ENCODE measurements at regions of chr7 and their contacts with region 1.

Region 1: GRCh38 chr7:100586266-100587025 is at the start of gene FBXO24:
- DNase-seq: peak; percentile 99
- ATAC-seq: peak; percentile 84
- H3K4me3 ChIP-seq: peak within 1 kb of the TSS; percentile 78
- H3K27ac ChIP-seq: peak within 1 kb of the TSS; percentile 77
- H3K4me1 ChIP-seq: peaks cover 17% of the 10 kb centered on the region
- H3K27me3 ChIP-seq: no peaks in the 10 kb centered on the region
- CTCF ChIP-seq: no peak
- total RNA-seq, gene FBXO24: 0.40 TPM in 1 of 2 replicates, not detected in the other

Region 2: DNA sequence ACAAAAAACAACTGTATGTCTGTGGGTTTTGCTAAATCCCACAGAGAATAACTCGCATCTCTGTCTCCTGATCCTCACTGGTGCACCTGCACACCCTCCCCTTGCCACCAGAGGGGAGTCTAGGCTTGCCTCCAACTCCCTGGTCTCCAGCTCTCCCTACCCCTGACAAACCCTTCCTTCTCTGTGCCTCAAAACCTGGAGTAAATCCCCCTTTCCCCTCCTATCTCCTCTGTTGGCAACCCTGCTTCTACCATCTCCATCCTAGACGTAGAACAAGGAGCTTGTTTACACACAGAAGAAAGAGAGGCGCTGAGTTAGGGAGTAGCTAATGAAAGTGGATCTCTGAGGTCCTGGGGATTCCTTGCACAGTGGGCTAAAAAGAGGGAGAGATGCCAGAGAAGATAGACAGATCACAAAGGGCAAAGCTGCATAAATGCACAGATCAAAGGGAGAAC is 453.7 kb before region 1 on chr7:
- CTCF ChIA-PET with region 1: no interaction called
- POLR2A ChIA-PET with region 1: no interaction called
- intact Hi-C with region 1: no loop called
- DNase-seq: peak; percentile 68
- ATAC-seq: peak; percentile 80
- H3K4me3 ChIP-seq: no peak overlapping the region
- H3K27ac ChIP-seq: no peak overlapping the region
- H3K4me1 ChIP-seq: 0 out of 2 replicates have a peak, but pooled peaks cover 4% of the 10 kb centered on the region
- H3K27me3 ChIP-seq: no peaks in the 10 kb centered on the region
- CTCF ChIP-seq: peak; percentile 87

Region 3: GRCh38 chr7:100469227-100470044 is 117.0 kb before region 1 on chr7:
- CTCF ChIA-PET with region 1: interaction called, 10 read pairs
- POLR2A ChIA-PET with region 1: no interaction called
- intact Hi-C with region 1: no loop called
- DNase-seq: peak; percentile 79
- ATAC-seq: peak; percentile 76
- H3K4me3 ChIP-seq: no peak overlapping the region
- H3K27ac ChIP-seq: no peak overlapping the region
- H3K4me1 ChIP-seq: no peaks in the 10 kb centered on the region
- H3K27me3 ChIP-seq: no peaks in the 10 kb centered on the region
- CTCF ChIP-seq: peak; percentile 80

Region 4: DNA sequence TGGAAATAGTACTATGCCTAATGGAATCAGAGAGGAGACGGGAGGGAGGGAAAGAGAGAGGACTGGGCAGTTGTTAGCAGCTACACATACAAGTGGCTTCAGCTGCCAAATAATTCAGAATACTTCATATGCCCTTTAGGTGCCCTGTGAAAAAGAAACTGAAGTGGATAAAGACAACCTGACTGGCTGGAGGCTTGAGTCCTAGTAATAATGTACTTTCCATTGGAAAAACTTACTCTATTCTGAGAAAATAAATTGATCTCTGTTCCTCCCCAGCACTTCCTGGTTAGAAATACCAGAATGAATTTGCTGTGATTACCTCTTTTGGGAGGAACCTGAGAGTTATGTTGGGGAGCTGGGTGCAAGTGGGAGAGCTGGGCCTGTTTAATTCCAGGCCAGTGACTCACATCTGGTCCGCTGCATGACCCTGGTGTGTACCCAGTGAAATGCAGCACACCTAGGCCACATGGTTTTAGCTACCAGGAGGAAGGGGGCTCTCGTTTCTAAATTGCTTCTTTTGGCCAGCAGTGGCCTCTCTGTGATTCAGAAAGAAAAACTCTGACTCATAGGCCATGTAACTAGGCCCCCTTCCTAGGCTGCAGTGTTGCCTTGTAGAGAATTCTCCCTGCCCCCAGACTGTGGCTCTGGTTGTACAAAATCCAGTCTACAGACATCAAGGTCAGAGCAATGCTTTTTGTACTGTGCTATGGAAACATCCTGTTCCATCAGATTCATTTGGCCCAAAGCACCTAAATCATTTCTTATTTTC is 40.9 kb before region 1 on chr7:
- CTCF ChIA-PET with region 1: interaction called, 4 read pairs
- POLR2A ChIA-PET with region 1: interaction called, 17 read pairs
- intact Hi-C with region 1: loop called (anchors 1 kb)
- DNase-seq: peak; percentile 91
- ATAC-seq: peak; percentile 90
- H3K4me3 ChIP-seq: peak overlapping the region; percentile 46
- H3K27ac ChIP-seq: peak overlapping the region; percentile 83
- H3K4me1 ChIP-seq: peaks cover 46% of the 10 kb centered on the region
- H3K27me3 ChIP-seq: no peaks in the 10 kb centered on the region
- CTCF ChIP-seq: 0 out of 2 replicates have a peak, but pooled peaks have one; percentile 21

Region 5: GRCh38 chr7:100604028-100604975 is 17.9 kb after region 1 on chr7:
- CTCF ChIA-PET with region 1: interaction called, 4 read pairs
- POLR2A ChIA-PET with region 1: no interaction called
- intact Hi-C with region 1: loop called (anchors 2 kb)
- DNase-seq: peak; percentile 59
- ATAC-seq: peak; percentile 65
- H3K4me3 ChIP-seq: peak overlapping the region; percentile 80
- H3K27ac ChIP-seq: no peak overlapping the region
- H3K4me1 ChIP-seq: peaks cover 24% of the 10 kb centered on the region
- H3K27me3 ChIP-seq: no peaks in the 10 kb centered on the region
- CTCF ChIP-seq: peak; percentile 52

Region 6: GRCh38 chr7:100691676-100692577 is 105.5 kb after region 1 on chr7:
- CTCF ChIA-PET with region 1: no interaction called
- POLR2A ChIA-PET with region 1: no interaction called
- intact Hi-C with region 1: loop called (anchors 5 kb)
- DNase-seq: peak; percentile 78
- ATAC-seq: peak; percentile 75
- H3K4me3 ChIP-seq: peak overlapping the region; percentile 96
- H3K27ac ChIP-seq: no peak overlapping the region
- H3K4me1 ChIP-seq: peaks cover 12% of the 10 kb centered on the region
- H3K27me3 ChIP-seq: no peaks in the 10 kb centered on the region
- CTCF ChIP-seq: peak; percentile 94

Region 7: GRCh38 chr7:100819551-100819950 is 233.1 kb after region 1 on chr7:
- CTCF ChIA-PET with region 1: no interaction called
- POLR2A ChIA-PET with region 1: no interaction called
- intact Hi-C with region 1: no loop called
- DNase-seq: no peak
- ATAC-seq: no peak
- H3K4me3 ChIP-seq: no peak overlapping the region
- H3K27ac ChIP-seq: no peak overlapping the region
- H3K4me1 ChIP-seq: peaks cover under 1% of the 10 kb centered on the region; the same call in 1 of the 2 replicates
- H3K27me3 ChIP-seq: no peaks in the 10 kb centered on the region
- CTCF ChIP-seq: no peak

Measured in PC-3 (cell line).